HCT116 (cell line): ENCODE measurements at regions of chr1 and their contacts with region 1.

Region 1: DNA sequence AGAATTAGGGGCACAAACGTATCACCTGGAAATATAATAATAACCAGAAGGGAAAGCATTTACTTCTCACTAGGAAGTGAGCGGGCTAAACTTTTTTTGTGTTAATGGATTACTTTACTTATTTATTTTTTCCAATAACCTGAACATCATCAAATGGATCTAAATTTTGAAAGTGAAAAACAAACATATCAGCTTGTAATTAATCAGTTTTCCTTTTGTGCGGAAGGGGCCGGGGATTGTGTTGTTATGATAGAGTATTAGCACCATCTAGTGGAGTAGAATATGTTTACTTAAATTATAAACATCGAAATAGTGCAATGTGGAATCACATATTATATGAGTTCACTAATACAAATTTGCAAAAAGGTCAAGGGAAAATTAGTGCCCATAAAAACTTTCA is 9.0 kb downstream of the CFH start:
- DNase-seq: peak; percentile 23
- ATAC-seq: peak; percentile 69; the same call in 1 of the 2 replicates
- H3K4me3 ChIP-seq: no peak overlapping the region
- H3K27ac ChIP-seq: no peak overlapping the region
- H3K4me1 ChIP-seq: no peaks in the 10 kb centered on the region
- H3K27me3 ChIP-seq: no peaks in the 10 kb centered on the region
- CTCF ChIP-seq: peak in 2 of 3 experiments; percentile 55 to 60; a peak in 4 of 6 replicates
- POLR2A ChIP-seq: no peak
- RAD21 ChIP-seq: peak; percentile 82

Region 2: GRCh38 chr1:196317535-196318522 is 343.0 kb before region 1 on chr1:
- CTCF ChIA-PET with region 1: interaction called, 8 read pairs
- POLR2A ChIA-PET with region 1: no interaction called
- RAD21 ChIA-PET with region 1: interaction called in 1 of 2 experiments, 3 read pairs
- intact Hi-C with region 1: loop called (anchors 1 kb)
- DNase-seq: peak; percentile 32
- ATAC-seq: peak; percentile 66; the same call in 1 of the 2 replicates
- H3K4me3 ChIP-seq: no peak overlapping the region
- H3K27ac ChIP-seq: no peak overlapping the region
- H3K4me1 ChIP-seq: no peaks in the 10 kb centered on the region
- H3K27me3 ChIP-seq: no peaks in the 10 kb centered on the region
- CTCF ChIP-seq: peak; percentile 36 to 70 (median 68); a peak in 5 of 6 replicates
- POLR2A ChIP-seq: no peak
- RAD21 ChIP-seq: peak; percentile 72

Region 3: DNA sequence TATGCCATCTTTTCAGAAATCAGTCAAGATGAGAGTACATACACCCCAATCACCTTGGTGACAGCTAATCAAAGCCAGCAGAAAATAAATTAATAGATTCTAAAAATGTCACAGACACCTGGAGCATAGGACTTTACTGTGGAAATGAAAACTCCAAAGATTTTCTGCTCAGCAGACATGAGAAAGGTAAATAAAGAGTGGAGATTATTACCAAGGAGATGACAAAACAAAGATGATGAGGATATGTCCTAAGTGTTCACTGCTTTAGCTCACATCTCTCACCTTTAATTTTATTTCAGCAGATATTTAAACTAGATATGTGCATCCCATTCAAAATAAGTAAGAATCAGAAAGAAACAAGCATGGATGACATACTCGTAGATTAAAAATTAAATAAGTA is 37.8 kb before region 1 on chr1:
- CTCF ChIA-PET with region 1: no interaction called
- POLR2A ChIA-PET with region 1: no interaction called
- RAD21 ChIA-PET with region 1: no interaction called
- intact Hi-C with region 1: no loop called
- DNase-seq: no peak
- ATAC-seq: no peak
- H3K4me3 ChIP-seq: no peak overlapping the region
- H3K27ac ChIP-seq: no peak overlapping the region
- H3K4me1 ChIP-seq: no peaks in the 10 kb centered on the region
- H3K27me3 ChIP-seq: no peaks in the 10 kb centered on the region
- CTCF ChIP-seq: no peak
- POLR2A ChIP-seq: no peak
- RAD21 ChIP-seq: no peak

Region 4: GRCh38 chr1:197399755-197400527 is 739.1 kb after region 1 on chr1:
- CTCF ChIA-PET with region 1: no interaction called
- POLR2A ChIA-PET with region 1: no interaction called
- RAD21 ChIA-PET with region 1: no interaction called
- intact Hi-C with region 1: no loop called
- DNase-seq: peak; percentile 74
- ATAC-seq: peak; percentile 84
- H3K4me3 ChIP-seq: no peak overlapping the region
- H3K27ac ChIP-seq: no peak overlapping the region
- H3K4me1 ChIP-seq: no peaks in the 10 kb centered on the region
- H3K27me3 ChIP-seq: no peaks in the 10 kb centered on the region
- CTCF ChIP-seq: peak; percentile 32 to 76 (median 68); a peak in 5 of 6 replicates
- POLR2A ChIP-seq: no peak
- RAD21 ChIP-seq: peak; percentile 61